Psoas muscle (tissue), 8 donors: ENCODE measurements at regions of chr17 and their contacts with region 1.

Region 1: DNA sequence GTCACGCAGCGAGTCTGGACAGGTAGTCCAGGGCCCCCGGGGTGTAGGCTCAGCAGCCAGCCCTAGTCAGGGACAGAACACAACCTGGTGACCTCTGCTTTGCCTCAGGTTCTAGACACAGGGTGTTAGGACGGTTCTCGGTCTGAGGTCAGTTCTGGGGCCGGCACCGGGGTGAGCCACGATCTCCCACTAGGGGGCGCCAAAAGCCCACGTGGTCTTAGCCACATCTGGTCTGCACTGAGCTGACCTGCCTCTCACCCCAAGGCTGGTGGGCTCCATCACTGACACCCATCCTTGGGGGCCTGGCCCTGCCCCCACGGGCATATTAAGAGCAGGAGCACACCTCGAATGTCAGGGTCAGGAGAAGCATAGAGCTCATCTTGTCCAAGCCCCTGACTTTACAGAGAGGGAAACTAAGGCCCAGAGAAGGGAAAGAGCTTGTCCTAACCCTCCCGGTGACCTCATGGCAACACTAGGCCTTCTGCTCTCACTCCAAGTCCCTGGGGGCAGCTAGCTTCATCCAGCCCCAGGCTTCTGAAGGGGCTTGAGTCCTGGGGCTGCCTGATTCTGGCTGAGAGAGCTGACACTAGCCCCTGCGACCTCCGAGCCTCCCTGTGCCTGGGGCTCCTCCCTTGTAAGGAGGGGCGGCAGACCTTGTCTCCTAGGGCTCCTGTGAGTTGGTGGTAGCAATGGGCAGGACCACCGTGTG is 9.0 kb downstream of the SLC5A10 start:
- DNase-seq: peak; percentile 78 to 89
- ATAC-seq: peak; percentile 90 to 97 (median 94)
- H3K4me3 ChIP-seq: no peak overlapping the region
- H3K27ac ChIP-seq: no peak overlapping the region
- H3K4me1 ChIP-seq: no peaks in the 10 kb centered on the region
- H3K27me3 ChIP-seq: no peaks in the 10 kb centered on the region
- CTCF ChIP-seq: peak; percentile 89

Region 2: DNA sequence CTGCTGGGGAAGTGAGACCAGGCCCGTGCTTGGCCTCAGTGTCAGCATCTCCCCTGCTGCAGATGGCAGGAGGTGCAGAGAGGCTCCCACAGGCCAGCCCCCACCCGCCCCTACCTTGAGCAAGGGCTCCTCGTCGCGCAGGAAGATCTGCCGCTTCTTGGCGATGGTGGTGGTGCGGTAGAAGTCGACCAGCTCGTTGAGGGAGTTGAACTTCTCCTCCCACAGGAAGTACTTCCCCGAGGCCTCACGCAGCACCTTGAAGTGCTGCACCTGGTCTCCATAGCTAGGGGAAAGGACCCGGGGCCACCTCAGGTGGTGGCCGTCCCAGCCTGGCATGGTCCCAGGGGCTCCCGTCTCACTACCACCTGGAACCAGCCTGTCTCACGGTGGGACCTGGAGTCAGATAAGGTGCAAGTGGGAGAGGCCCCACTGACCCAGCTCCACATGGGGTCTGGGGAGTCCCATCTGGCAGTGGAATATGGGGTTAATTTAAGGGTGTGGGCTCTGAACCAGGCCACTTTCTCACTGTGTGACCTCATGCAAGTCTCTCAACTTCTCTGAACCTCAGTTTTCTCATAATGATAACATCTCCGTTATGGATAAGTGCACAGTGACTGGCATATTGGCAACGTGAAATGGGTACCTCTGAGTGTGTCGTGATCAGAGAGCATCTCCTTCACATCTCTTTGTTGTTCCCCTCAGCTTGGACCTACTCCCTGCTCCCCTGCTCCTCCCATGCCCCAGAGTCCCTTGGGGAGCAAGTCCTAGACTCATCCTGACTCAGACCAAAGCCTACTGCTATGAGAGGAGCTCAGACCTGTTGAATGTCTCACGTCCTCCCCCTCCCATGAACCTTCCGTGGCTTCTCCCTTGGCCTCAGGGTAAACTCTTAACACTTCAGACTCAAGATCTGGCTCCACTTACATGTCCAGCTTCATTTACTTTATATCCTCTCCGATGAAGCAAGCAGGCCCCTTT is 63.4 kb after region 1 on chr17:
- intact Hi-C with region 1: loop called in 1 of 2 experiments (anchors 10 kb)
- DNase-seq: peak; percentile 11 to 39
- ATAC-seq: no peak
- H3K4me3 ChIP-seq: no peak overlapping the region
- H3K27ac ChIP-seq: no peak overlapping the region
- H3K4me1 ChIP-seq: no peaks in the 10 kb centered on the region
- H3K27me3 ChIP-seq: no peaks in the 10 kb centered on the region
- CTCF ChIP-seq: no peak